T-cell (primary cell): ENCODE measurements at regions of chr3 and their contacts with region 1.

Region 1: GRCh38 chr3:11507719-11508118 is 136.0 kb downstream of the VGLL4 start:
- DNase-seq: no peak
- ATAC-seq: no peak
- H3K4me3 ChIP-seq: no peak overlapping the region
- H3K4me3 Mint-ChIP-seq: no peak overlapping the region
- H3K27ac ChIP-seq: no peak overlapping the region
- H3K27ac Mint-ChIP-seq: no peak overlapping the region
- H3K4me1 ChIP-seq: no peaks in the 10 kb centered on the region
- H3K4me1 Mint-ChIP-seq: peaks cover 0 to 5% (median 0%) of the 10 kb centered on the region in 3 donors
- H3K27me3 ChIP-seq: no peaks in the 10 kb centered on the region
- H3K27me3 Mint-ChIP-seq: no peaks in the 10 kb centered on the region

Region 2: DNA sequence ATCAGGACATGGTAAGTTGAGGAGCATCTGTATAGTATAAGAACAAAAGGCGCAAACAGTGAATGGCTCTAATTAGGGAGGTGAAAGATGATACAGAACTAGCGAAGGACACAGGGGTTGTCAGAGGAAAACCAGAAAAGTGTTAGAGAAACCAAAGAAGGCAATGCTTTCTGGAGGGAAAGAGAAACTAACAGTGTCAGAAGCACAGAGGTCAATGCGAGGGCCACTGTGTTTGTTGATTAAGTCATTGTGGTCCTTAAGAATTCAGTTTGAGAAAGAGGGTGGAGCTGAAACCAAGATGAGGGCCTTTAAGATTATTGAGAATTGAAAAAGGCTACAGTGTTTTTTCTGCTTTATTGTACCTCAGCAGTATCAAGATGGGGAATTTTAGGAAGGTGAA is 206.7 kb before region 1 on chr3:
- CTCF ChIA-PET with region 1: no interaction called
- POLR2A ChIA-PET with region 1: no interaction called
- DNase-seq: peak in 8 of 35 experiments; percentile 5 to 39 (median 12)
- ATAC-seq: peak in 1 of 4 experiments; percentile 37
- H3K4me3 ChIP-seq: no peak overlapping the region
- H3K4me3 Mint-ChIP-seq: no peak overlapping the region
- H3K27ac ChIP-seq: peak overlapping the region; percentile 11
- H3K27ac Mint-ChIP-seq: peak overlapping the region in 1 of 2 donors; percentile 72
- H3K4me1 ChIP-seq: peaks cover 0 to under 1% of the 10 kb centered on the region in 2 experiments
- H3K4me1 Mint-ChIP-seq: peaks cover 4 to 10% (median 7%) of the 10 kb centered on the region in 3 donors
- H3K27me3 ChIP-seq: no peaks in the 10 kb centered on the region
- H3K27me3 Mint-ChIP-seq: no peaks in the 10 kb centered on the region

Region 3: DNA sequence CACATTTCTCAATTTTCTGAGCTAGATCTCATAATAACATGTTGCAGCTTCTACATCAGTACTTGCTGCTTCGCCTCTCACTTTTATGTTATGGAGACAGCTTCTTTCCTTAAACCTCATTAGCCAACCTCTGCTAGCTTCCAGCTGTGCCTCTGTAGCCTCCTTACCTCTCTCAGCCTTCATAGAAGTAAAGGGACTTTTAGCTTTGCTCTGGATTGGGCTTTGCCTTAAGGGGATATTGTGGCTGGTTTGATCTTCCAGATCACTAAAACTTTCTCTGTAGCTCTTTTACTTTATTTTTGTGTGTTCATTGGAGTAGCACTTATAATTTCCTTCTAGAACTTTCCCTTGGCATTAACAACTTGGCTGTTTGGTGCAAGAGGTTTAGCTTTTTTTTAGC is 85.4 kb before region 1 on chr3:
- CTCF ChIA-PET with region 1: no interaction called
- POLR2A ChIA-PET with region 1: interaction called in 1 of 2 experiments, 11 read pairs
- DNase-seq: no peak
- ATAC-seq: no peak
- H3K4me3 ChIP-seq: no peak overlapping the region
- H3K4me3 Mint-ChIP-seq: no peak overlapping the region
- H3K27ac ChIP-seq: no peak overlapping the region
- H3K27ac Mint-ChIP-seq: no peak overlapping the region
- H3K4me1 ChIP-seq: no peaks in the 10 kb centered on the region
- H3K4me1 Mint-ChIP-seq: peaks cover 6 to 17% (median 10%) of the 10 kb centered on the region in 3 donors
- H3K27me3 ChIP-seq: no peaks in the 10 kb centered on the region
- H3K27me3 Mint-ChIP-seq: no peaks in the 10 kb centered on the region

Region 4: DNA sequence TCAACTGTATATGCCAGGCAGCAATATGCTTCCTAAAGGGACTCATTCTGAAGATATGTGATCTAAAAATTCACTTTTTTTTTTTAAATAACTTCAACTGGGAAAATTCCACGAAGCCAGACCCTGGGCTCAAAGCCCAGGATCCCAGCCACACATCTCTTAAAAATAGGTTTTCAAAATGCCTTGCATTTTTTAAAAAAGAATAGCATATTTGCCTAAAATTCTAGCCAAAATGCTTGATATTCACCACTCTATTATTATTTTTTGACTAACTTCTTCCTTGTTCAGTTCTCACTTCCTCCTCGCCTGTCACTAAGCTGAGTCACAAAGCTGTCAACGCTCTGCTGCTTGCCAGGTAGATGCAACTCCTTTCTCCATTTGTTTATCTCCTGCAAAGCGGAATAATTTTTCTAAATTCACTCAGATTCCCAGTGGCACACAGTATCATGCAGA is 164.0 kb after region 1 on chr3:
- CTCF ChIA-PET with region 1: no interaction called
- POLR2A ChIA-PET with region 1: no interaction called
- DNase-seq: no peak
- ATAC-seq: no peak
- H3K4me3 ChIP-seq: no peak overlapping the region
- H3K4me3 Mint-ChIP-seq: no peak overlapping the region
- H3K27ac ChIP-seq: no peak overlapping the region
- H3K27ac Mint-ChIP-seq: no peak overlapping the region
- H3K4me1 ChIP-seq: no peaks in the 10 kb centered on the region
- H3K4me1 Mint-ChIP-seq: peaks cover 0 to 8% (median 3%) of the 10 kb centered on the region in 3 donors
- H3K27me3 ChIP-seq: no peaks in the 10 kb centered on the region
- H3K27me3 Mint-ChIP-seq: no peaks in the 10 kb centered on the region